Vagina (tissue), 2 donors: ENCODE measurements at regions of chr6 and their contacts with region 1.

Region 1: DNA sequence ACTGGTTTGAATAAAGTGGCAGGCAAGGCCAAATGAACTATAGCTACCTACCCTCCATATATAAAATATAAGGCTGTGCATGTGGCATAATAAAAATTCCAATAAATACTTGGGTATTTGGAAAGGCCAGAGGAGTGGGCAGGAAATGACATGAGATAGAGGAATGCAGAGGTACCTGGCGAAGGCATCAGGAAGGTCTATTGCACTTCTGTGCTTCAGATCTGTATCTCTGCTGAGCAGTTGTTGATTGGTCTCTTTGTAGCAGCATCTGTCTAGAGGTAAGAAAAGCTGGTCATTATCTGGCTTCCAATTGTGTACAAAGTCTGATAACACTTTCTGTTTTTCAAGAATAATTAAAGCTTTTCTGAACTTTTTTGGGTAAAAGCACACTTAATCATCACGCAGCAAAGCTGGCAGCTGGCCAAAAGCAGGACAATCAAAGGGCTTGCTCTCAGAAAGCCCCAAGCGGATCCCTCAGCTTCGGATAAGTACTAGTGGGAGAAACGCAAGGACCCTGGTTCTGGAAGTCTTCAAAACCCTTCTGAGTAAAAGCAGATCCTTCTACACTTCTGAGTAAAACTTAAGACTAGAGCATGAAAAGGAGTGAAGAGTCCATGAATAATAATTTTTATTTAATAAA is 120.1 kb upstream of the TCF21 start:
- DNase-seq: no peak
- H3K4me3 ChIP-seq: no peak overlapping the region
- H3K27ac ChIP-seq: no peak overlapping the region
- H3K4me1 ChIP-seq: no peaks in the 10 kb centered on the region
- H3K27me3 ChIP-seq: no peaks in the 10 kb centered on the region
- CTCF ChIP-seq: no peak
- POLR2A ChIP-seq: no peak

Region 2: DNA sequence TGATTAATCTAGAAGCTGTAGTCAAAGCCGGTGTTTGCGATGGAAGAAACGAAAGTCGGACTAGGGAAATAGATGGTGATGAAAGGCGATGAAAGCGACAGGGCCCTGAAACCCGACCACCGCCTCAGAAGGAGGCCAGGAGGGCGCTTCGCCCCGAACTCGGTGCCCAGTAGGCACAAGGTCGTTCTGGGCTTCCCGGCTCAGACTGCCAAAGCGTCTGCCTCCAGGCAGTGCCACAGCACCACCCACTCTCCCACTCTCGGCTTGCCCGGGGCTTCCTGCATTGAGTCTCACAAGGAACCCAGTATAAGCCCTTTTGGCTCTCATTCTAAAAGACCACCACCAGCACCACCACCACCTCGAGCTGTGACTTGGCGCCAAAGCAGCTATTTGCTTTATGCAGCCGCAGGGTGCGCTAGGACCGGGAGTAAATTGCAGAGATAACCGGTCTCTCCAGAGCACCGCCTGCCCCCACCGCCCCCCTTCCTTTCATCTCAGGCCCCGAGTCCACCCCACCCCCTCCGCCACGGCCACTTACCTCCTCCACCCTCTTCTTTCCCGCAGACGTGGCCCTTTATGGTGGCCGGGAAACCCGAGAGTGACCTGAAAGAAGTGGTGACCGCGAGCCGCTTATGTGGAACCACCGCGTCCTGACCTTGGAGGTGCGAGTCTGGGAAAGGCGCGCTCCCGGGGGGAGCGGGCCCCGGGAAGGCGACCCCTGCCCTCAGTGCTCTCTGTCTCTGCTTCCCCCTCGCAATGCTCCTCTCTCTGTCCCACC is 122.6 kb after region 1 on chr6:
- intact Hi-C with region 1: loop called (anchors 10 kb)
- DNase-seq: no peak
- H3K4me3 ChIP-seq: peak overlapping the region; percentile 54 to 55
- H3K27ac ChIP-seq: peak overlapping the region; percentile 86
- H3K4me1 ChIP-seq: peaks cover 41% of the 10 kb centered on the region
- H3K27me3 ChIP-seq: peaks cover 9% of the 10 kb centered on the region
- CTCF ChIP-seq: no peak
- POLR2A ChIP-seq: no peak